Gastrocnemius medialis (tissue), 4 donors: ENCODE measurements at regions of chr9 and their contacts with region 1.

Region 1: GRCh38 chr9:21730899-21731298 is 71.5 kb upstream of the MTAP start:
- DNase-seq: no peak
- ATAC-seq: no peak
- H3K4me3 ChIP-seq: no peak overlapping the region
- H3K27ac ChIP-seq: no peak overlapping the region
- H3K4me1 ChIP-seq: no peaks in the 10 kb centered on the region
- H3K27me3 ChIP-seq: no peaks in the 10 kb centered on the region
- CTCF ChIP-seq: no peak
- POLR2A ChIP-seq: no peak

Region 2: DNA sequence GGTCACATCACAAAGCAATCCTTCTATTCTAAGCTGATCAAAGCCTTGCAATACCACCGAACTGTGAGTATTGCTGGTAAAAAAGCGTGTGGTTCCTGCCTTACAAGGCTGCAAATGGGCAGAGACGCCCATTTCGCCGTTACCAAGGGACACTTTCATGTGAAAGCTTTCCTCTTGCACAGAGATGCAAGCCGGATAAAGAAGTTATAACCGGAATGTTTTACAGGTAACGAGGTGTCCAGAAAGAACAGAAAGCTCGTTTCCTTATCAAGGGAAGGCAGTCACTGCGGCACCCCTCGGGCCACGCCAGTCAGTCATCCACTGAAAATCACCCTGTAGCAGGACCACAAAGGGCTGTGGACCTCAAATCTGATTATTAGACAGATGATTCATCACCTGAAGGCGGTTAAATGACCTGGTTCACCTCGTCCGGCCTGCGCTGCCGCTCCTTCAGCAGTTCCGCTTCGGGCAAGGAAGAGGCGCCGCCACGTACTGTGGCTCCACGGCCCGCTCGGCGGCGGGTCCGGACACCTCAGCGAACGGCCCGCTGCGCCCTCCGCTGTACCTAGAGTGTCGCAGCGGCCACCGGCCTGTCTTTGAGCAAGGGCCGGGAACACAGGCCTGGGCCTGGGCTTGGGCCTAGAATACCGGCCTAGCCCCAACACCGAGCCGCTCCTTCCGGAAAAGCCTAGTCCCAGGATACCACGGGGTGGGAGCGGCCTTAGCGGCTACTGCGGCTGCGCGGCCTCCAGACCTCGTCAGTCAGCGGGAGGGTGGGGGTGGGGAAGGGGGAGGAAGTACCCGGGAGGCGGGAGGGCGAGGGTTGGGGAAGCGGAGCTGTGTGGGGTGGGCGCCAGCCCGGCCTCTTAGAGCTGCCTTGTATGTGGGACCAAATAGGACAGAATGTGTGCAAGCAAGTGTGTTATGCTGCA is 395.9 kb before region 1 on chr9 and contains the start of gene KLHL9:
- in situ Hi-C with region 1: no loop called
- intact Hi-C with region 1: no loop called
- DNase-seq: peak; percentile 84 to 87
- ATAC-seq: peak; percentile 97
- H3K4me3 ChIP-seq: peak within 1 kb of the TSS; percentile 68 to 96 (median 90)
- H3K27ac ChIP-seq: peak within 1 kb of the TSS; percentile 87 to 93 (median 92)
- H3K4me1 ChIP-seq: peaks cover 43 to 44% of the 10 kb centered on the region in 2 donors
- H3K27me3 ChIP-seq: no peaks in the 10 kb centered on the region
- CTCF ChIP-seq: peak in 1 of 5 experiments; percentile 13
- POLR2A ChIP-seq: peak in 1 of 2 donors; percentile 59
- total RNA-seq, gene KLHL9: 5.2 to 8.2 (median 6.5) TPM

Region 3: GRCh38 chr9:21638104-21638503 is 92.8 kb before region 1 on chr9:
- in situ Hi-C with region 1: no loop called
- intact Hi-C with region 1: loop called (anchors 10 kb)
- DNase-seq: no peak
- ATAC-seq: no peak
- H3K4me3 ChIP-seq: no peak overlapping the region
- H3K27ac ChIP-seq: no peak overlapping the region
- H3K4me1 ChIP-seq: no peaks in the 10 kb centered on the region
- H3K27me3 ChIP-seq: no peaks in the 10 kb centered on the region
- CTCF ChIP-seq: no peak
- POLR2A ChIP-seq: no peak